Natural killer cell (primary cell): ENCODE measurements at regions of chr21 and their contacts with region 1.

Region 1: GRCh38 chr21:24636696-24637095 is 970.6 kb downstream of the MRPL39 start:
- DNase-seq: no peak
- ATAC-seq: no peak
- H3K4me3 ChIP-seq: no peak overlapping the region
- H3K4me3 Mint-ChIP-seq: no peak overlapping the region
- H3K27ac ChIP-seq: no peak overlapping the region
- H3K27ac Mint-ChIP-seq: no peak overlapping the region
- H3K4me1 ChIP-seq: no peaks in the 10 kb centered on the region
- H3K4me1 Mint-ChIP-seq: no peaks in the 10 kb centered on the region
- H3K27me3 ChIP-seq: no peaks in the 10 kb centered on the region
- H3K27me3 Mint-ChIP-seq: no peaks in the 10 kb centered on the region
- CTCF ChIP-seq: no peak

Region 2: DNA sequence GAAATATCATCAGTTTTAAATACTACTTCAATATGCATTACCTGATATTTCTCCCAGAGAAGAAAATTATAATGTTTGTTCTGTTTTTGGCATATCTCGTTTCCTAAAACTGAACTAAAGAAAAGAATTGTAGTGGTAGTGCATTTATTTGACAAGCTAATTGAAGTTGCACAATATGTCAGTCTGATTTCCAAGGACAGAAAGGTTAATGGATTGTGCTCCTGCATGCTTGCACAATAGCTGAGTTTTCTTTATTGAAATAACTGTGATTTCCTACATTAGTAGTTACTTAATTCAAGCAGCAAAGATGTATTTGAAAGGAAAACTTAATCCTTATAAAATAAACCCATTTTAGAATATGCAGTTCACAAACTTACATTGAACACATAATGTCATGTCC is 1590.7 kb before region 1 on chr21:
- intact Hi-C with region 1: loop called (anchors 5 kb)
- DNase-seq: no peak
- ATAC-seq: no peak
- H3K4me3 ChIP-seq: no peak overlapping the region
- H3K4me3 Mint-ChIP-seq: no peak overlapping the region
- H3K27ac ChIP-seq: no peak overlapping the region
- H3K27ac Mint-ChIP-seq: no peak overlapping the region
- H3K4me1 ChIP-seq: no peaks in the 10 kb centered on the region
- H3K4me1 Mint-ChIP-seq: no peaks in the 10 kb centered on the region
- H3K27me3 ChIP-seq: no peaks in the 10 kb centered on the region
- H3K27me3 Mint-ChIP-seq: no peaks in the 10 kb centered on the region
- CTCF ChIP-seq: no peak

Region 3: GRCh38 chr21:24577301-24577700 is 59.4 kb before region 1 on chr21:
- intact Hi-C with region 1: no loop called
- DNase-seq: no peak
- ATAC-seq: no peak
- H3K4me3 ChIP-seq: no peak overlapping the region
- H3K4me3 Mint-ChIP-seq: no peak overlapping the region
- H3K27ac ChIP-seq: no peak overlapping the region
- H3K27ac Mint-ChIP-seq: no peak overlapping the region
- H3K4me1 ChIP-seq: no peaks in the 10 kb centered on the region
- H3K4me1 Mint-ChIP-seq: no peaks in the 10 kb centered on the region
- H3K27me3 ChIP-seq: no peaks in the 10 kb centered on the region
- H3K27me3 Mint-ChIP-seq: no peaks in the 10 kb centered on the region
- CTCF ChIP-seq: no peak